ENCODE measurements at regions of chr11 and their contacts with region 1.

Region 1: GRCh38 chr11:43895601-43896000 is 15.0 kb downstream of the ALKBH3 start:
- DNase-seq: no peak
- H3K4me3 ChIP-seq: no peak overlapping the region
- H3K27ac ChIP-seq: no peak overlapping the region
- H3K4me1 ChIP-seq: peaks cover 15% of the 10 kb centered on the region
- H3K27me3 ChIP-seq: no peaks in the 10 kb centered on the region
- CTCF ChIP-seq: no peak
- POLR2A ChIP-seq: no peak

Region 2: GRCh38 chr11:43852057-43852636 is 43.5 kb before region 1 on chr11:
- CTCF ChIA-PET with region 1: no interaction called
- POLR2A ChIA-PET with region 1: no interaction called
- dilution Hi-C with region 1: no loop called
- intact Hi-C with region 1: no loop called
- DNase-seq: peak; percentile 78
- H3K4me3 ChIP-seq: no peak overlapping the region
- H3K27ac ChIP-seq: no peak overlapping the region
- H3K4me1 ChIP-seq: no peaks in the 10 kb centered on the region
- H3K27me3 ChIP-seq: no peaks in the 10 kb centered on the region
- CTCF ChIP-seq: peak; percentile 59 to 73
- POLR2A ChIP-seq: no peak

Region 3: DNA sequence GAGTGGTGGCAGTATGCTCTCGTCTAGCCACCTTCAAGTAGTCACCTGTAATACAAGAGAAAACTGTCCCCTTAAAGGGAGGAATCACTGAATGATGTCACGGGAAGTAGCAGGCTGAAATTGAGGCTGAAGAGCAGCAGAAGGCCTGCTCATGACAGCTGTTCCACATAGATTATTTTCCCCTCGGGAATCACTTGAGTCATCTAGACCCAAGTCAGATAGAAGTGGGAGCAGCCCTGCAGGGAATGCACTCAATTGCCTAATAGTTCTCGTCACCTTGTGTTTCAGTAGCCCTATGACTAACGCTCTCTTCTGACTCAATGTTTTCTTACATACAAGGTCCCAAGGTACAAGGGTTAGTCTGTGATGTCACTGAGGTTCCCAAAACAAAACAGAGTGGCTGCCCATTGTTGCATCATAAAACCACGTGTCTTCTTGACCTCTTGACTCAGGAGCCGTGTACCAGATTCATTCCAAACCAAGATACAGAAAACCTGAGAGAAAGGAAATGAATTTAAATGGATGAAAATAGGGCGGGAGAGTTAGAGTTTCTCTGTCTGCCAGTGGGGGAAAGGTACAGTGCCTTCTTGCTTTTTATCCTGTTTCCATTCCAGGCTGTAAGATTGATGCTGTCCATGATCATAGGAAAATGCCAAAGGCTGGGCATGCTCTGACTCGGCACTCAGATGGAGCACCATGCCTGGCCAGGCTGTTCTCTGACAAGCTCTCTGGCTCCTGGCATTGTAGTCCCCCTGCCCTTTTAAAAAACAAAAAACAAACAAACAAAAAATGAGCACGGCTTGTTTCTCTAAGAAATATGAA is 25.2 kb after region 1 on chr11:
- CTCF ChIA-PET with region 1: interaction called, 3 read pairs
- POLR2A ChIA-PET with region 1: no interaction called
- dilution Hi-C with region 1: no loop called
- intact Hi-C with region 1: loop called (anchors 1 kb)
- DNase-seq: peak; percentile 96
- H3K4me3 ChIP-seq: no peak overlapping the region
- H3K27ac ChIP-seq: peak overlapping the region; percentile 75
- H3K4me1 ChIP-seq: peaks cover 39% of the 10 kb centered on the region
- H3K27me3 ChIP-seq: no peaks in the 10 kb centered on the region
- CTCF ChIP-seq: no peak
- POLR2A ChIP-seq: no peak

Region 4: DNA sequence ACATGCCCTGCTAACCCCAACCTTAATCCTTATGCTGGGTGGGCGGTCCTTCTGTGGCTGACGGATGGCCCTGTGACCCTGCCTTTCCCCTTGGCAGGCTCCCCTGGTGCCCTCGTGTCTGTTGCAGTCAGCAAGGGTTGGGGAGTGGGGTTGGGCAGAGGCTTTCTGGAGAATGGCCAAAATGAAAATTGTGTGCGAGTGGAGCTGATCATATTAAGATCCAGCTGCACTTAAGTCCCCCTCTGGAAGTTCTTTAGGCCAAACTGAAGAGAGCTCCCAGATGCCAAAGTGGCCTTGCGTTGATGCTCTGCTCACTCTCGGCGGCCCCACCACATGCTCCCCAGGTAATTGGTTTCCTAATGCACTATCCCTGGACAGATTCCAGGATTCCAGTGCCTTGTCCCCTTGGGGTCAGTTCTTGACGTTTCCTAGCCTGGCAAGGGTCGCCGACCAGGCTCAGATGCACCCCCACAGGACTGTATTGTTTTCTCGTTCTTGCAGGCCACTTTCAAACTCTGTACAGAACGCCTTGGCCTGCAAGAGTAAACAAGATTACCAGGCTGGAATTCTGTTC is 30.4 kb after region 1 on chr11:
- CTCF ChIA-PET with region 1: interaction called, 3 read pairs
- POLR2A ChIA-PET with region 1: no interaction called
- dilution Hi-C with region 1: no loop called
- intact Hi-C with region 1: loop called (anchors 1 kb)
- DNase-seq: peak; percentile 52
- H3K4me3 ChIP-seq: no peak overlapping the region
- H3K27ac ChIP-seq: peak overlapping the region; percentile 2
- H3K4me1 ChIP-seq: peaks cover 41% of the 10 kb centered on the region
- H3K27me3 ChIP-seq: no peaks in the 10 kb centered on the region
- CTCF ChIP-seq: no peak
- POLR2A ChIP-seq: no peak

Region 5: DNA sequence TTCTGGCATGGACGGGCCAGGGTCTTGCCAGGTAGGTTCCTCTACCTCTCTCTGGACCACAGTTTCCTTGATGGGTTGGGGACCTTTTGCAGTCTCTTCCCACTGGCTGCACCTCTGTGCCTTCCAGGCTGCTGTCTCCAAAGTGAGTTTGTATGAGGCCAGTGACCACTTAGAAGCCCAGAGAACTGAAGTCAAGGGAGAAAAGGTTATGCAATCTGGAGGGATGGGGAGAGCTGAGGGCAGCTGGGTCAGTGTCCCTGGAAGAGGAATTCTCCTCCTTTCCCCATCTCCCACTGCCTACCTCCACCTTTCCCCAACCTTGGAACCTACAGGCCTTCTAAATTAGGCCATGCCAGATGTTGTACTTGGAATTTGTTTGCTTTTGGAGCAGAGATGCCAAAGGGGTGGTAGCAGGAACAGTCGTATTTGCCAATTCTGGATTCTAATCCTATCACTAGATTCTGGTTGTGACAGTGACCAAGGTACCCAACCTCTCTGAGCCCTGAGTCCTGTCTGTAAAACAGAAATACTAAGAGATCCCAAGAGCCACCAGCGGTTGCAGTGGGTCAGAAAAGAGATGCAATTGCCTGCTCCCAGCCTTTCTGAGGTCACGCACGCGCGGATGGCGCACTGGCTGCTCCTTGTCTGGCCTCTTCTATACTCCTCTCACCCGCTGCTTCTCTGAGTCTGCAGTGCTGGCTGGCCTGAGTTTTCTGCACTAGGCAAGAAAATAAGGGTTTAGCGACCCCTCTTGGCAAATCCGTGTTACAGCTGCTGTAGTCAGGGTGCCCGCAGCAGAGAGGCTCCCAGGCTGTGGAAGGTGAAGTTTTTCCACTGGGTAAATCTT is 141.4 kb after region 1 on chr11:
- CTCF ChIA-PET with region 1: interaction called, 161 read pairs
- POLR2A ChIA-PET with region 1: no interaction called
- dilution Hi-C with region 1: no loop called
- intact Hi-C with region 1: loop called (anchors 1 kb)
- DNase-seq: peak; percentile 65
- H3K4me3 ChIP-seq: no peak overlapping the region
- H3K27ac ChIP-seq: no peak overlapping the region
- H3K4me1 ChIP-seq: no peaks in the 10 kb centered on the region
- H3K27me3 ChIP-seq: peaks cover 3 to 6% of the 10 kb centered on the region in 2 experiments
- CTCF ChIP-seq: peak; percentile 75 to 82
- POLR2A ChIP-seq: no peak